Activated T-helper 1 cell treated with anti-CD3 and anti-CD28 coated beads, Interleukin-12 subunit alpha, Interleukin-12 subunit beta, Interleukin-2, Interleukin-4 antibody, amounts not matched to agents 30 ng/mL and 10 ng/mL and 1 ng/mL, durations not matched to agents 14 hours and 24 hours and 36 hours (primary cell): ENCODE measurements at regions of chr12 and their contacts with region 1.

Region 1: DNA sequence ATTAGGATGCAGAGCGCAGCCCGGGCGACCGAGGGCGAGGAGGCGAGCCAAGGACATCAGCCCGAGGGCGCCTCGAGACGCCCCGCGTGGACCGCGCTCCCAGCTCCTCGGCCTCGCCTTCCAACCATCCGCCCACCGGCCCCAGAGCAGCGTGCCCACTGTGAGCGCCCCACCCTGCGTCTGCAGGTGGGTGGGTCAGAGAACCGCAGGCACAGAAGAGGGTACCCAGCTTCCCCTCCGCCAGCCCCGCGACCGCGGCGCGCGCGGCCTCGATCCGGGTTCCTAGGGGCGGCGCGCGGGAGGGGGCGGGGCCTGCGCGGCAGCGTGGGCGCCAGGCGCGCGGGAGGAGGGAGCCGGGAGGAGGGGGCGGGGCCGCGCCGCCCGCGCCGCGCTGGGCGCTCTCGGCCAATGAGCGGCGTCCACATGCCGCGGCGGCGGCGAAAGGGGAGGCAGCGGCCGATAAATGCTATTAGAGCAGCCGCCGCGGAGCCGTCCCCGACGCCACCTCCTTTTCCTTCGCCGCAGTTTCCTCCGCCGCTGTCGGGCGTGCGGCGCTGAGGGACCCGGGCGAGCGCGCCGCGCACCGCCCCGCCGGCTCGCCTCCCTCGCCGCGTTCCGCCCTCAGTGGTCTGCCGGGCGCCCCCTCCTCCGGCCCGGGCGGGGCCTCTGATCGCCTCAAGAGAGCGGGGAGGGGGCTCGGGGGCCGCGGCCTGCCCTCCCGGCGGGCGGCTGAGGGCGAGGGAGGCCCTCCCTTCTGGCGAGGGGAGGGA is at the start of gene ATP2A2:
- DNase-seq: peak; percentile 89
- H3K4me3 Mint-ChIP-seq: peak within 1 kb of the TSS; percentile 90
- H3K27ac Mint-ChIP-seq: peak within 1 kb of the TSS; percentile 85
- H3K4me1 Mint-ChIP-seq: peaks cover 48% of the 10 kb centered on the region
- H3K27me3 Mint-ChIP-seq: peaks cover 3% of the 10 kb centered on the region
- total RNA-seq, gene ATP2A2: 208 and 211 TPM in 2 replicates

Region 2: DNA sequence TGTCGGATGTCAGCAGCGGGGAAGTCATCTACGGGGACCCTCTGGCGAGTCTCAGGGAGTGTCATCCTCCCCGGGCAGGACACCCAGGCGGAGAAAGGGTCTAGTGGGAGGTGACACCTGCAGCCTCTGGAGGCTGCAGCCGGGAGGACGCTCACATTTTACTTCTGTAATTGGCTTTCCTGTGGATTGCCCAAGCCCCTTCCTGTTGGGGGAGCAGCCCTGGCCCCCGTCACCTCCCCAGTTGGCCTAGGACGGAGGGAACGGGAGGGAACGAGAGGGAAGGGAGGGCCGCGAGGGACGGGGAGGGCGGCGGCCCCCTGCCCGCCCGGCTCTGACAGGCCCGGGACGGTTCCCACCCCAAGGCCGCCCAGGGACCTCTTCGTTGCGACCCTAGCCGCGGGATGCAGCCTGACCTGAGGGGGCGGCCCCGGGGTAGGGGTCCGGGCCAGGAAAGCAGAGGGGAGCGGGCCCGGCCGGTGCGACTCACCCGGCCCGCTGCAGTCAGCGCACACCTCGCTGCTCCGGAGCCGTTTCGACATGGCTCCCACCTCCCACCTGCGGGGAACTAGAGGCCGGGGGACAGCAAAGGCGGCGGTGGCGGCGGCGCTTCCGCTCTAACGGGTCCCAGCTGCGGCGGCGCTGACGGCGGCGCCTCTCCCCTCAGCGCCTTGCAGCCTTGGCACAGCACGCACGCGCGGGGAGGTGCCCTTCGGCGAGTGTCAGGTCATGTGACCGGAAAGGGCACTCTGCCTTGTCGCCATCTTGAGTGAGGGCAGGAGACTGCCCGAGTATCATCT is 285.1 kb before region 1 on chr12 and contains the start of gene GIT2:
- intact Hi-C with region 1: loop called (anchors 10 kb)
- DNase-seq: peak; percentile 95
- H3K4me3 Mint-ChIP-seq: peak within 1 kb of the TSS; percentile 99
- H3K27ac Mint-ChIP-seq: peak within 1 kb of the TSS; percentile 96
- H3K4me1 Mint-ChIP-seq: peaks cover 72% of the 10 kb centered on the region
- H3K27me3 Mint-ChIP-seq: no peaks in the 10 kb centered on the region
- total RNA-seq, gene GIT2: 86.2 and 87.5 TPM in 2 replicates

Region 3: DNA sequence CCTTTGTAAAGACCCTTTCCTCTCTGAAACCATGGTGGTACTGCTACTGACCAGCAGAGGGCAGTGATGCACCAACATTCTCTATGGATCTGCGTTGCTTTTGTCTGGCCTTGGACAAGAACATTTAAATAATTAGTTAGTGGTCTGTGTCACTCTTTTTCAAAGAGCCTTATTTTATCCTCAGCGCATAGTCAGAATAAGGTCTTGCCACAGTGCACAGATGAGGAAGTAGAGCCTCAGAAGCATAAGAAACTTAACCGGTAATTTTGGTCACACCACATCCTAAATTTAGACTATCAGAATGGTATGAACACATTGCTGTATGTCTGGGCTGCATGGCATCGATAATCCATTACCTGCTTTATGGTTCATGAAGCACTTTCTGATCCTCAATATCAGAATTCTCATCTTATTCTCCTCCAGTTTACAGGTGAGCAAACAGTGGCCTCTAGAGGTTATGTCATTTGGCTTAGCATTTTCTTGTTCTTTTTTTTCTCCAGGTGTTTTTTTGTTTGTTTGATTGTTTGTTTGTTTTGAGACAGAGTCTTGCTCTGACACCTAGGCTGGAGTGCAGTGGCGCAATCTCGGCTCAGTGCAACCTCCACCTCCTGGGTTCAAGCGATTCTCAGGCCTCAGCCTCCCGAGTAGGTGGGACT is 180.5 kb before region 1 on chr12:
- intact Hi-C with region 1: loop called (anchors 2 kb)
- DNase-seq: peak; percentile 39
- H3K4me3 Mint-ChIP-seq: no peak overlapping the region
- H3K27ac Mint-ChIP-seq: no peak overlapping the region
- H3K4me1 Mint-ChIP-seq: peaks cover 9% of the 10 kb centered on the region
- H3K27me3 Mint-ChIP-seq: no peaks in the 10 kb centered on the region

Region 4: GRCh38 chr12:110256780-110257431 is 24.1 kb before region 1 on chr12:
- intact Hi-C with region 1: no loop called
- DNase-seq: no peak
- H3K4me3 Mint-ChIP-seq: no peak overlapping the region
- H3K27ac Mint-ChIP-seq: no peak overlapping the region
- H3K4me1 Mint-ChIP-seq: no peaks in the 10 kb centered on the region
- H3K27me3 Mint-ChIP-seq: peaks cover 7% of the 10 kb centered on the region

Region 5: DNA sequence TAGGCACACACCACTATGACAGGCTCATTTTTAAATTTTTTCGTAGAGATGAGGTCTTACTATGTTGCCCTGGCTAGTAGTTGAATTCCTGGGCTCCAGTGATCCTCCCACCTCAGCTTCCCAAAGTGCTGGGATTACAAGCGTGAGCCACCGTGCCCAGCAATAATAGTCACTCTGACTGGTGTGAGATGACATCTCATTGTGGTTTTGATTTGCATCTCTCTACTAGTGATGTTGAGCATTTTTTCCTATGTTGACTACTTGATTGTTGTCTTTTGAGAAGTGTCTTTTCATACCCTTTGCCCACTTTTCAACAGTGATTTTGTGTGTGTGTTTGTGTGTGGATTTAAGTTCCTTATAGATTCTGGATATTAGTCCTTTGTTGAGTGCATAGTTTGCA is 26.4 kb after region 1 on chr12:
- intact Hi-C with region 1: no loop called
- DNase-seq: no peak
- H3K4me3 Mint-ChIP-seq: no peak overlapping the region
- H3K27ac Mint-ChIP-seq: peak overlapping the region; percentile 73
- H3K4me1 Mint-ChIP-seq: peaks cover 39% of the 10 kb centered on the region
- H3K27me3 Mint-ChIP-seq: no peaks in the 10 kb centered on the region

Region 6: DNA sequence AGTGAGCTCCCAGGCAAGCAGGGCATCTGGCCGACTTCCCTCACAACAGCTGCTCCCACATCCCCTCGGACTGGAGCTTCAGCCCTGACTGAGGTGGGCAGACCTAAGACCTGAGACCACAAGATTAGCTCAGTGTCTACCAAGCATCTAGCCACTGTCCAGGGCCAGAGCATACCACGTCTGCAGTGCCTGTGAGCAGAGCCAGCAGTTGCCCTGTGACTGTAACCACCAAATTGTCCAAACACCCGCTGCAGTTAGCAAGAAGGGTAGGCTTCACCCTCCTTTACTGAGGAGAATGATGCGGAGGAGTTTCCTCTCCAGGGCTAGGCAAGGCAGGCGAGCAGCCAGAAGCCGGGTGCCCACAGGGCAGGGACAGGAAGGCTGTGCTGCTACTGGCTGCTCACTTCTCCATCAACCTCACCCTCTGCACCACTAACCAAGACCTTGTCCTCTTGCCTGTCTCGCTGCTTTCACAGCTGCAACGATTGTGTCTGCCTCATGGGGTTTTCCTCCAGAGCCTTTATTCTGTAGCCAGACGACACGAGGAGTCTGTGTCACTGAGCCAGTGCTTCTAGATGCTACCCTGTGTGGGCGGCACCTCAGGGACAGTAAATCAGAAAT is 68.7 kb after region 1 on chr12:
- intact Hi-C with region 1: loop called (anchors 5 kb)
- DNase-seq: peak; percentile 55
- H3K4me3 Mint-ChIP-seq: peak overlapping the region; percentile 54
- H3K27ac Mint-ChIP-seq: peak overlapping the region; percentile 88
- H3K4me1 Mint-ChIP-seq: peaks cover 45% of the 10 kb centered on the region
- H3K27me3 Mint-ChIP-seq: no peaks in the 10 kb centered on the region

Region 7: DNA sequence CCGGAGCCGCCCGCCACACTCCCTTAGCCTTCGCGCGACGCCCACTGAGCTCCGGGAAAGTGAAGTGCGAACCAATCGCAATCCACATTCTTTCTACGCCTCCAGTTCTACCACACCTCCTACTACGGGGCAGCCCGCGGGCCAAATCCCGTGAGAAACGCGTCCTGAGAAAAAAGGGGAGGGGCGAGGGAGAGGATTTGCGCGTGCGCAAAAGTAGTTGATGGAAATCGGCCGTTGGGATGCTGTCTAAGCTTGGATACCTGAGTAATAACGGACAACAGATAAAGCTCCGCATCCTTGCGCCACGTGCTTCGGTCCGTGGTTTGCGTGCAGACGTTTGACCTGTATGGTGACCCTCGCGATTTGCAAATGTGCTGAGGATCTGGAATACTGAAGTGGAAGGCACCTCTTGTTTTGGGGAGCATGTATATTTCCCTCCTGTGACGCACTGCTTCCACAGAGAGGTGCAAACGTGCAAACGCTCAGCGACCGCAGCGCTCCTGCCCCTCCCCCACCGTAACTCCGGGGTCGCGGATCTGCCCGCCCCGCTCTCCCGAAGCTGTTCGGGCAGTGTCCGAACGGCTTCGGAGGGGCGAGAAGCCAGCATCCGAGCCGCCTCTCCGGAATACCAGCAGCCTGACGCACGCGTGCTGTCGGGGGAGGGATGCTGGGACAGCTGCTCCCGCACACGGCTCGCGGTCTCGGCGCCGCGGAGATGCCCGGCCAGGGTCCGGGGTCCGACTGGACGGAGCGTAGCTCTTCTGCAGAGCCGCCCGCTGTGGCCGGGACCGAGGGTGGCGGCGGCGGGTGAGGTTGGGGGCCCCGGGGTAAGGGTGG is 187.5 kb after region 1 on chr12 and contains the starts of genes FAM216A and GPN3:
- intact Hi-C with region 1: loop called (anchors 1 kb)
- DNase-seq: peak; percentile 96
- H3K4me3 Mint-ChIP-seq: peak within 1 kb of the TSS; percentile 96
- H3K27ac Mint-ChIP-seq: peak within 1 kb of the TSS; percentile 95
- H3K4me1 Mint-ChIP-seq: peaks cover 31% of the 10 kb centered on the region
- H3K27me3 Mint-ChIP-seq: no peaks in the 10 kb centered on the region
- total RNA-seq, gene FAM216A: 40.8 and 45.9 TPM in 2 replicates
- total RNA-seq, gene GPN3: 50.3 and 55.5 TPM in 2 replicates

Region 8: DNA sequence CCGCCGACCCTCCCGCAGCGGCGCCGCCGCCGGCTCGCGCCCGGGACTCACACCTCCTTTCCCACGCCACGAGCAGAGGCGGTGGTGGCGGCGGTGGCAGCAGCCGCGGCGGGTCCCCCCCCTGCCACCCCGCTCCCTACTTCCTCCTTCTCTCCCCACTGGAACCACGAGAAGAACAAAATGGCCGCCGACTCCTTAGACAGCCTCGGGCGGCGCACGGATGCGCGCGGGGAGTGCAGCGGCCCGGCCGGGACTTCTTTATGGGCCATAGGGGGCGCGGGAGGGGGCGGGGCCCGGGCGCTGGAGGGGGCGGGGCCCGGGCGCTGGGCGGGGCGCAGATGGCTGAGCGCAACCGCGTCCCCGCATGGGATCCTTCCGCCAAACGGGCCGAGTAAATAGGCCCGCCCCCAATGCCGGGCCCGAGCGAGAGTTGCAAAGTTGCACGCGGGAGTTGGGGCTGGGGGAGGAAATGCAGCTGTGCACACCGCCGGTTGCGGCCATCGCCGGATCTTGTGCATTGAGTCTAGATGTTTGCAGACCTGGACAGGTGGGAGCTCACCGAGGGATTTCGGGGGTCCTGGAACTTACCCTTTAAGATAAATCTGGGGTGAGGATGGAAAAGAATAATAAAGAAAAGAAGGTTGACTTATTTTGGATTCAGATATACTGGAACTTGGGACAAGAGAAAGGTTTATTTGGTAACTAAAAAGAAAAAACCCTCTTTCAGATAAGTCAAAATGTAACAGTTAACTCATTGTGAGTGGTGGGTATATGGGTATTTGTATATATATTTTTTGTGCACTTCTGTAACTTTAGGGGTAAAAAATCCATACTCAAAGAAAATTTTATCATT is 462.0 kb after region 1 on chr12 and contains the start of gene PPP1CC:
- intact Hi-C with region 1: loop called (anchors 5 kb)
- DNase-seq: peak; percentile 88
- H3K4me3 Mint-ChIP-seq: peak within 1 kb of the TSS; percentile 100
- H3K27ac Mint-ChIP-seq: peak within 1 kb of the TSS; percentile 99
- H3K4me1 Mint-ChIP-seq: peaks cover 45% of the 10 kb centered on the region
- H3K27me3 Mint-ChIP-seq: no peaks in the 10 kb centered on the region
- total RNA-seq, gene PPP1CC: 449 and 469 TPM in 2 replicates